GM12878 (cell line): ENCODE measurements at regions of chr1 and their contacts with region 1.

Region 1: GRCh38 chr1:116020668-116021275 is 44.5 kb downstream of the SLC22A15 start:
- DNase-seq: no peak
- ATAC-seq: peak; percentile 97
- H3K4me3 ChIP-seq: no peak overlapping the region
- H3K27ac ChIP-seq: no peak overlapping the region
- H3K4me1 ChIP-seq: no peaks in the 10 kb centered on the region
- H3K27me3 ChIP-seq: no peaks in the 10 kb centered on the region
- CTCF ChIP-seq: peak; percentile 72 to 85 (median 79)
- EP300 ChIP-seq: no peak
- POLR2A ChIP-seq: no peak
- RAD21 ChIP-seq: peak; percentile 70

Region 2: GRCh38 chr1:115807723-115808122 is 213.0 kb before region 1 on chr1:
- CTCF ChIA-PET with region 1: interaction called, 42 read pairs
- POLR2A ChIA-PET with region 1: no interaction called
- RAD21 ChIA-PET with region 1: interaction called, 20 read pairs
- SMC1A ChIA-PET with region 1: interaction called, 15 read pairs
- in situ Hi-C with region 1: no loop called
- intact Hi-C with region 1: loop called (anchors 1 kb)
- DNase-seq: peak; percentile 13
- ATAC-seq: peak; percentile 86
- H3K4me3 ChIP-seq: no peak overlapping the region
- H3K27ac ChIP-seq: no peak overlapping the region
- H3K4me1 ChIP-seq: no peaks in the 10 kb centered on the region
- H3K27me3 ChIP-seq: peaks cover 0 to 2% of the 10 kb centered on the region in 2 experiments; a peak in 1 of 4 replicates
- CTCF ChIP-seq: peak; percentile 66 to 73 (median 73); a peak in 5 of 6 replicates
- EP300 ChIP-seq: no peak
- POLR2A ChIP-seq: no peak
- RAD21 ChIP-seq: peak; percentile 70

Region 3: GRCh38 chr1:115882913-115883902 is 137.6 kb before region 1 on chr1:
- CTCF ChIA-PET with region 1: no interaction called
- POLR2A ChIA-PET with region 1: no interaction called
- RAD21 ChIA-PET with region 1: no interaction called
- SMC1A ChIA-PET with region 1: no interaction called
- in situ Hi-C with region 1: no loop called
- intact Hi-C with region 1: no loop called
- DNase-seq: no peak
- ATAC-seq: no peak
- H3K4me3 ChIP-seq: no peak overlapping the region
- H3K27ac ChIP-seq: no peak overlapping the region
- H3K4me1 ChIP-seq: no peaks in the 10 kb centered on the region
- H3K27me3 ChIP-seq: peaks cover 2% of the 10 kb centered on the region in 2 experiments; a peak in 1 of 4 replicates
- CTCF ChIP-seq: no peak
- EP300 ChIP-seq: no peak
- POLR2A ChIP-seq: no peak
- RAD21 ChIP-seq: no peak

Region 4: DNA sequence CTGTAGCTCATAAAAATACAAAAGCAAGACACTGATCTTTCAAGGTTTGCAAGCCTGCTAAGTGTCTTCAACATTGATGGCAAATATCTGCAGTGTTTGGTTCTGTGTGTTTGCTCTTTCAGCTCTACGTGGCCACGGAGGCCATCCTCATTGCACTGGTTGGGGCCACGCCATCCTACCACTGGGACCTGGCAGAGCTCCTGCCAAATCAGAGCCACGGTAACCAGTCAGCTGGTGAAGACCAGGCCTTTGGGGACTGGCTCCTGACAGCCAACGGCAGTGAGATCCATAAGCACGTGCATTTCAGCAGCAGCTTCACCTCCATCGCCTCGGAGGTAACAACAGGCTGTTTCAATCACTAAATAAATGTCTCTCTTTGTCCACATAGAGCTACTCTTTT is 28.9 kb before region 1 on chr1:
- CTCF ChIA-PET with region 1: interaction called, 54 read pairs
- POLR2A ChIA-PET with region 1: no interaction called
- RAD21 ChIA-PET with region 1: interaction called, 3 read pairs
- SMC1A ChIA-PET with region 1: interaction called, 3 read pairs
- in situ Hi-C with region 1: no loop called
- intact Hi-C with region 1: no loop called
- DNase-seq: no peak
- ATAC-seq: no peak
- H3K4me3 ChIP-seq: no peak overlapping the region
- H3K27ac ChIP-seq: no peak overlapping the region
- H3K4me1 ChIP-seq: no peaks in the 10 kb centered on the region
- H3K27me3 ChIP-seq: no peaks in the 10 kb centered on the region
- CTCF ChIP-seq: no peak
- EP300 ChIP-seq: no peak
- POLR2A ChIP-seq: no peak
- RAD21 ChIP-seq: no peak

Region 5: GRCh38 chr1:116006486-116006964 is 14.2 kb before region 1 on chr1:
- CTCF ChIA-PET with region 1: interaction called, 50 read pairs
- POLR2A ChIA-PET with region 1: interaction called, 3 read pairs
- RAD21 ChIA-PET with region 1: interaction called, 4 read pairs
- SMC1A ChIA-PET with region 1: interaction called, 22 read pairs
- in situ Hi-C with region 1: no loop called
- intact Hi-C with region 1: no loop called
- DNase-seq: peak; percentile 26
- ATAC-seq: peak; percentile 96
- H3K4me3 ChIP-seq: peak overlapping the region; percentile 59
- H3K27ac ChIP-seq: no peak overlapping the region; the same call in 1 of the 2 replicates
- H3K4me1 ChIP-seq: 0 out of 2 replicates have a peak, but pooled peaks cover 2% of the 10 kb centered on the region
- H3K27me3 ChIP-seq: no peaks in the 10 kb centered on the region
- CTCF ChIP-seq: no peak
- EP300 ChIP-seq: no peak
- POLR2A ChIP-seq: no peak
- RAD21 ChIP-seq: no peak

Region 6: DNA sequence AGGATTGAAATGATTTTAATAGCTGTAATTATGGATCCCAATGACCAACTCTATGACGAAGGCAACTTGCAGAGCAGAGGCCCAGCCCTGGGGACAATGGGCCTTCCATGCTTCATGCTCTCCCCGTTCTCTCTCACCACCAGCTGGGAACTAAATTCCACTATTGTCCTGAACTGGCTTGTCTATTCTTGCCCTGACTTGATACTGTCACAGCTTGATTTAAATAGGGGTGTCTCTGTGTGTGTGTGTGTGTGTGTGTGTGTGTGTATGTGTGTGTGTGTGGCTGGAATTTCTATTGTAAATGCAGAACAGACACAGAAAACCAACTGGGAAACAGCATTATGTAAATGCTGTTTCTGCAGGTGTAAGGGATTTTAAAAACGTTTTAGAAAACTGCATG is 12.6 kb after region 1 on chr1:
- CTCF ChIA-PET with region 1: interaction called, 60 read pairs
- POLR2A ChIA-PET with region 1: no interaction called
- RAD21 ChIA-PET with region 1: interaction called, 3 read pairs
- SMC1A ChIA-PET with region 1: interaction called, 5 read pairs
- in situ Hi-C with region 1: no loop called
- intact Hi-C with region 1: no loop called
- DNase-seq: no peak
- ATAC-seq: no peak
- H3K4me3 ChIP-seq: no peak overlapping the region
- H3K27ac ChIP-seq: no peak overlapping the region
- H3K4me1 ChIP-seq: no peaks in the 10 kb centered on the region
- H3K27me3 ChIP-seq: no peaks in the 10 kb centered on the region
- CTCF ChIP-seq: no peak
- EP300 ChIP-seq: no peak
- POLR2A ChIP-seq: no peak
- RAD21 ChIP-seq: no peak